Left ventricle myocardium superior (tissue), 1 donor: ENCODE measurements at regions of chr1 and their contacts with region 1.

Region 1: DNA sequence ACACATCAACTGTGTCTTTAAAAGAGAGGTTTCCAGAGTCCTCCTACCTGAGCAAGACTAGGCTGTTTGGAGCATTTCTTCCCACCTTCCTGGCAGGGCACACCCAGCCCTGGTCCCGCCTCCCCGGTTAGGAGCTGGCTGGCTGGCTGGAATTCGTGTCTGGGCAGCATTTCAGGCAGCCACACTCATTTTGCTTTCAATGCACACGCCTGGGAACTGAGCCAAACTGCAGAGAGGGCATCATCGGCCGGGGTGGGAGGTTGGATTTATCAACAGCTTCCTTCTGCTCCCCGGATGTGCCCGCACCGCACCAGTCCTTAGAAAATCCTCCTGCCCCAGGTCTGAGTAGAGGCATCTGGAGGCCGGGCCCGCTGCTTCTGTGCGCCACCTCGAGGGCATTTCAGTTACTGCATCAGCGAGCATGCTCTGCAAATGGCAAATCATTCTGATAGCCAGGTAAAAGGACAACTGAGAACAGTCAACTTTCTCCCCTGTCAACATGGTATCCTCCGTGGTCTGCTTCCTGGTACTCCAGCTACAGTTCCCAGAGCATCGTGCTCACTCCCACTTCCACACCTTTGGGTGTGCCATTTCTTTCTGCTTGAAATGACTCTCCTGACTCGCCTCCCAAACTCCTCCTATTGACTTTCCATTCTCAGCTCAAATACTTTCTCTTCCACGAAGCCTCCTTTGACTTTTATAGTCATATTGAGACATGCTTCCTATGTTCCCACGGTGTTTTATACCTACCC is 20.6 kb downstream of the TCEA3 start:
- DNase-seq: peak; percentile 91
- ATAC-seq: peak; percentile 87

Region 2: DNA sequence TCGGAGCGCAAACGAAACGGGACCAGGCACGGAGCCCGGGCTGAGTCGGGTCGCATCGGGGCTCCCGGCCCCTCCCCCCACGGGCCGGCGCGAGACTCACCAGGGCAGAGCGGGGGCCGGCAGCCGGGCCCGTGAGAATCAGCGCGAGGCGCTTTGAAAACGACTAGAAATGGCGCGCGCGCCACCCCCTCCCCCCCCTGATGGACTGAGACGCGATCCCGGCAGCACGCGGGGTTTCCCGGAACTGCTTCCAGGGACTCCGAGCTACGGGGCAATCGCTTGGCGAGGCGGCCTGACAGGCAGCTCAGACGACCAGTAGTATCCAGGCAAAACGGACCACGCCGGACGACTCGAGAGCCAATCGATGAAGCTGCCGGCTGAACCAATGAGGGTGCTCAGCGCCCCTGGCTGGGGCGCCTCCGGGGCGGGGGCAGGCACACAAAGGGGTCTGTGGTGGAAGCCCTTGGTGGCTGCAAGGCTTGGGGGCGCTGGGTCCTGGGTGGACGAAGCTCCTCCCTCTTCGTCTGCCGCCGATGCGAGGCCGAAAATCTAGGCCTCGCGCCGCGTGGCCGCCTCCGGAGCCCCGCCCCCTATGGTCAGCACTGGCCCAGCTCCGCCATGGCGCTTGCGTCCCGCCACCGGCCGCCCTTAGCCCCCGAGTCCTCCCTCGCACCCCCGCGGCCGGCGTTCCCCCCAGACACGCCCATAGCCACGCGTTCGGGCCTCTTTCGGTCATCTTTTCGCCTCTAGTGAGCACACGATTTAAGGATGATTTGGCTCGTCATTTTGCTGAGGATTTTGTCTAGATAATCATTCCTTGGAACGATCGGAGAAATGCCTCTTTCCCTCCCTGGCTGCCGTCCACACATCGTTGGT is 59.6 kb before region 1 on chr1 and contains the start of gene HNRNPR:
- intact Hi-C with region 1: loop called (anchors 10 kb)
- DNase-seq: peak; percentile 100
- ATAC-seq: peak; percentile 97
- total RNA-seq, gene HNRNPR: 54.9 TPM

Region 3: GRCh38 chr1:23484253-23485001 is 80.5 kb after region 1 on chr1:
- intact Hi-C with region 1: no loop called
- DNase-seq: peak; percentile 98
- ATAC-seq: peak; percentile 91